H1 (cell line): ENCODE measurements at regions of chr12 and their contacts with region 1.

Region 1: GRCh38 chr12:71636704-71637115 is 26.9 kb downstream of the ZFC3H1 start:
- DNase-seq: no peak
- H3K4me3 ChIP-seq: no peak overlapping the region
- H3K27ac ChIP-seq: no peak overlapping the region
- H3K4me1 ChIP-seq: no peaks in the 10 kb centered on the region
- H3K27me3 ChIP-seq: no peaks in the 10 kb centered on the region
- CTCF ChIP-seq: peak in 2 of 3 experiments; percentile 62 to 78; a peak in 2 of 4 replicates
- EP300 ChIP-seq: no peak
- POLR2A ChIP-seq: no peak
- RAD21 ChIP-seq: peak; percentile 70 to 71

Region 2: GRCh38 chr12:71610031-71610795 is 26.5 kb before region 1 on chr12:
- CTCF ChIA-PET with region 1: interaction called, 15 read pairs
- POLR2A ChIA-PET with region 1: no interaction called
- DNase-seq: no peak
- H3K4me3 ChIP-seq: no peak overlapping the region
- H3K27ac ChIP-seq: no peak overlapping the region
- H3K4me1 ChIP-seq: no peaks in the 10 kb centered on the region
- H3K27me3 ChIP-seq: no peaks in the 10 kb centered on the region
- CTCF ChIP-seq: no peak
- EP300 ChIP-seq: no peak
- POLR2A ChIP-seq: no peak
- RAD21 ChIP-seq: no peak

Region 3: DNA sequence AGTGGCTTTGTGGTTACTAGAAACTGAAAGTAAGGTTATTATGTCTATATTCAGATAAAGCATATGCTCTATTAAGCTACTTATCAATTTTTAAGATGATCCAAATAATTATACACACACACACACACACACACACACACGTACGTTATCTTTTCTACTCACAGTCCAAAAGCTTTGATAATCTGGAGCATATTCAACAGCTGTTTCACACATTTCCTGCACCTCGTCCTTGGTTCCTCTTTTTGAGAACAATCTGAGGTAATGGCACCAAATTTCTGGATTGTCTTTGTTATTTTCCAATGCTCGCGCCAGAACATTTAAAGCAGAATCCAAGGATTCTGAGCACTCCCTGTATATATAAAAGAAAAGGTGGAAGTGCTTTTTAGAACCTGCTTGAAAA is 10.6 kb before region 1 on chr12:
- CTCF ChIA-PET with region 1: interaction called, 21 read pairs
- POLR2A ChIA-PET with region 1: interaction called, 3 read pairs
- DNase-seq: no peak
- H3K4me3 ChIP-seq: no peak overlapping the region
- H3K27ac ChIP-seq: no peak overlapping the region
- H3K4me1 ChIP-seq: no peaks in the 10 kb centered on the region
- H3K27me3 ChIP-seq: no peaks in the 10 kb centered on the region
- CTCF ChIP-seq: no peak
- EP300 ChIP-seq: no peak
- POLR2A ChIP-seq: no peak
- RAD21 ChIP-seq: no peak